Left colon (tissue), 2 donors: ENCODE measurements at regions of chr13 and their contacts with region 1.

Region 1: DNA sequence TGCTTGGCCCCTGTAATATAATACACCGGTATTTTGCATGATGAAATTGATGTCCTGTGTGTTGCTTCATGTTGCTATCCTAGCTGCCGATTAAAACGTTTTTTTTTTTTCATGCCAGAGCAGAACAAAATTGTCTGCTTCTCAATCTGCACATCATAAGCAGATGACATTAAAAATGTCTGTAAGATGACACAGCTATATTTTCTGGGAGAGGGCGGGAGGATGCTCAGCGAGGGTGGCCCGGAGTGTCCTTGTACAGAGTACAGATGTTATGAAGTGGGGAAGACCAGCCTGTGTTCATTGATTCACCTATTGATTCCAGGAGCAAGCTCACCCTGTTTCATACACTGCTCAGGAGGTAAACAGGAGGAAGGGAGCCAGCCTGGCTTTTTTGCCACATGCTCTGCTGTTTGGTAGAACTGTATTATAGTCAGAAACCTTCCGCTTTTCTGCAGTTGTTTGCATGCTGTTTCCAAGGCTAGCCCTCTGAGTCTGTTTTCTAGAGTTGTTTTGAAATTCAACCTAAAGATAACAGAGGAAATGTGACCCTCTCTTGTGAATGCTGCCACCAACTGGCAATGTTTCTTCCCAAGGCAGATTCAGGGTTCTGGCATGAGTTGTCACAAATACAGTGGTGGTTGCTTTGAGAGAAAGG is 4.7 kb upstream of the IRS2 start:
- DNase-seq: peak in 1 of 2 donors; percentile 24
- ATAC-seq: no peak

Region 2: GRCh38 chr13:110108347-110109174 is 317.5 kb after region 1 on chr13:
- intact Hi-C with region 1: loop called in 1 of 2 experiments (anchors 10 kb)
- DNase-seq: peak; percentile 38 to 55
- ATAC-seq: peak; percentile 81